AG04450 (cell line): ENCODE measurements at regions of chr13 and their contacts with region 1.

Region 1: DNA sequence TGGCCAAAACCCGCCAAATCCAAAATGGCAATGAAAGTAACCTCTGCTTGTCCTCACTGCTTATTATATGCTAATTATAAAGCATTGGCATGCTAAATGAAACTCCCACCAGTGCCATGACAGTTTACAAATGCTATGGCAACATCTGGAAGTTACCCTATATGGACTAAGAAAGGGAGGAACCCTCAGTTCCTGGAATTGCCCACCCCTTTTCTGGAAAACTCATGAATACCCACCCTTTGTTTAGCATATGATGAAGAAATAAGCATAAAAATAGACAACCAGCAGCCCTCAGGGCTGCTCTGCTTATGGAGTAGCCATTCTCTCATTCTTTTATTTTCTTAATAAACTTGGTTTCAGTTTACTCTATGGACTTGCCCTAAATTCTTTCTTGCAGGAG is 269.8 kb downstream of the OLFM4 start:
- DNase-seq: no peak
- H3K4me3 ChIP-seq: no peak overlapping the region
- H3K27ac ChIP-seq: no peak overlapping the region
- H3K27me3 ChIP-seq: no peaks in the 10 kb centered on the region
- CTCF ChIP-seq: no peak

Region 2: DNA sequence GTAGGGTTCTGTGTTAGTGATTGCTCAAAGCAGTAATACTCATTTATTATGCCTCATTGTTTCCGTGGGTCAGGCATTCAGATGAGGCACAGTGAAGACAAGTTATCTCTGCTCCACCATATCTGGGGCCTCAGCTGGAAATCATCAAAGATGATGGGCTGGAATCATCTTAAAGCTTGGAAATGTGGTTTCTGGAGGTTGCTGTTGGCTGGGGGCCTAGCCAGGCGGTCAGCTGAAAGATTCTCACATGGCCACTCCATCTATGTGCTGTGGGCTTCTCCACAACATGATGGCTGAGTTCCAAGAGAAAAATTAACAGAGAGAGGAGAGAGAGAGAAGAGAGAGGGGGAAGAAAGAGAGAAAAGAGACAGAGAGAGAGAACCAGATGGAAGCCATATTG is 194.3 kb before region 1 on chr13:
- CTCF ChIA-PET with region 1: no interaction called
- POLR2A ChIA-PET with region 1: no interaction called
- DNase-seq: no peak
- H3K4me3 ChIP-seq: no peak overlapping the region
- H3K27ac ChIP-seq: no peak overlapping the region
- H3K27me3 ChIP-seq: no peaks in the 10 kb centered on the region
- CTCF ChIP-seq: no peak

Region 3: GRCh38 chr13:53250266-53250875 is 48.0 kb before region 1 on chr13:
- CTCF ChIA-PET with region 1: interaction called, 10 read pairs
- POLR2A ChIA-PET with region 1: no interaction called
- DNase-seq: peak; percentile 32
- H3K4me3 ChIP-seq: no peak overlapping the region
- H3K27ac ChIP-seq: no peak overlapping the region
- H3K27me3 ChIP-seq: no peaks in the 10 kb centered on the region
- CTCF ChIP-seq: peak; percentile 69